Activated CD4-positive, alpha-beta T cell treated with anti-CD3 and anti-CD28 coated beads, Interleukin-2, amount 10 ng/mL, durations not matched to agents 24 days and 14 days (primary cell): ENCODE measurements at regions of chr7 and their contacts with region 1.

Region 1: DNA sequence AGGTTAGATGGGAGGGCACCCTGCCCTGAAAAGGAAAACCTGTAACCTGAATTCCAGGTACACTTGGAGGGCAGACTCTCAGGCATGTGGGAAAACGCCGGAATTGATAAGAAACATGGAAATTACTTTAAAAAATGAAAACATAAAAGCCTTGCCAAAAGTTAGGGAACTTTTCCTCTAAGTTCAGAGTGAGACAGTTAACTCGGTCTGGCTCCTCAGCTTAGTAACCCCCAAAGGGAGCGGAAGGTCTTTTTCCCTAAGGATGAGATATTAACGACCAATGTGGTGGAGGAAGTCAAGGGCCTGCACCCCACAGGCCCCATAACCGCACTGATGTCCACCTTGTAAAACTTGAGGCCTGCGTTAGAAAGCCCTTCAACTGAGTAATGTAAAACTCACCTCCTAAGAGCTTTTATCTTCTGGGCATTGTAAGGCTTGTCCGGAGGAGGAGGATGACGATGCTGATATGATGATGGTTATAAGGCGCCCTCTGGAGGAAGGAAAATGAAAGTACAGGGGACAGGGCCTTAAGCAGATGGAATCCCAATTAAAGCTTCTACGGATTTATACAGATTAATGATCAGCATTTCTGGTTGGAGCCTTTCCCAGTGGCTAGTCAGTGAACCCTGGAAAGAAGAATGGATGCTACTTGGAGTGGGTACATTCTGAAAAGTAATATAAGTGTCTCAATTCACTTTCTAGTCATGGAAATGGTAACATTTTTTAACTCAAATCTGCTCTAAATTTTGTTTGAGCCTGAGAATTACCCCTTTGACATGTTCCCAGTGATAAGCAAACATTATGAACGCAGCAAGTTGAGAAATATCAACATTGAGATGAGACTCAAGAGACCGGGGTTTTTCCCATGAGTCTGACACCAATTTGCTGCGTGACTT is 694 bp downstream of the COL1A2 start:
- DNase-seq: peak; percentile 85
- H3K4me3 Mint-ChIP-seq: peak overlapping the region; percentile 76
- H3K27ac Mint-ChIP-seq: peak overlapping the region; percentile 65
- H3K4me1 Mint-ChIP-seq: peaks cover 28% of the 10 kb centered on the region
- H3K27me3 Mint-ChIP-seq: peaks cover 2% of the 10 kb centered on the region

Region 2: GRCh38 chr7:93245525-93246432 is 1149.6 kb before region 1 on chr7:
- intact Hi-C with region 1: loop called (anchors 5 kb)
- DNase-seq: no peak
- H3K4me3 Mint-ChIP-seq: no peak overlapping the region
- H3K27ac Mint-ChIP-seq: no peak overlapping the region
- H3K4me1 Mint-ChIP-seq: no peaks in the 10 kb centered on the region
- H3K27me3 Mint-ChIP-seq: no peaks in the 10 kb centered on the region

Region 3: GRCh38 chr7:93715234-93715633 is 680.2 kb before region 1 on chr7:
- intact Hi-C with region 1: loop called (anchors 10 kb)
- DNase-seq: peak; percentile 58
- H3K4me3 Mint-ChIP-seq: no peak overlapping the region
- H3K27ac Mint-ChIP-seq: no peak overlapping the region
- H3K4me1 Mint-ChIP-seq: peaks cover 1% of the 10 kb centered on the region
- H3K27me3 Mint-ChIP-seq: peaks cover 7% of the 10 kb centered on the region

Region 4: GRCh38 chr7:94087664-94088352 is 307.6 kb before region 1 on chr7:
- intact Hi-C with region 1: loop called (anchors 1 kb)
- DNase-seq: peak; percentile 88
- H3K4me3 Mint-ChIP-seq: peak overlapping the region; percentile 60
- H3K27ac Mint-ChIP-seq: no peak overlapping the region
- H3K4me1 Mint-ChIP-seq: peaks cover 4% of the 10 kb centered on the region
- H3K27me3 Mint-ChIP-seq: peaks cover 31% of the 10 kb centered on the region

Region 5: DNA sequence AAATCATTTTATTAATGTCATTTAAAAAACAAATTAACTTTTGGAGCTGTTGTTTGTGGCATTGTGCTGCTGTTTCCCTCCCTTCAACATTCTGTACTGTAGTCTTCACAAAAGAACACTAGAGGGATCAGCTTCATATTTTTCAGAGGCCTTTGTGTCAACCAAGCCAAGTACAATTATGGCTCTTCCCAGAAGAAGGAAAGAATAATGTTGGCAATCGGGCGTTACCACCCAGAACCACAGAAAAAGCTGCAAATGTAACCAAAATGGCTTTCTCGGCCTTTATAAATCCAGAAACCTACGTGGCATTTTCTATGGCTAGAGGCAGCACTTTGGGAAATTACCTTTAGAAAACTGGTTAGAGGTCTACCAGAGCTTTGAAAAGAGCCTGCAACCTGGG is 99.5 kb before region 1 on chr7:
- intact Hi-C with region 1: loop called (anchors 5 kb)
- DNase-seq: no peak
- H3K4me3 Mint-ChIP-seq: no peak overlapping the region
- H3K27ac Mint-ChIP-seq: no peak overlapping the region
- H3K4me1 Mint-ChIP-seq: no peaks in the 10 kb centered on the region
- H3K27me3 Mint-ChIP-seq: peaks cover 16% of the 10 kb centered on the region

Region 6: DNA sequence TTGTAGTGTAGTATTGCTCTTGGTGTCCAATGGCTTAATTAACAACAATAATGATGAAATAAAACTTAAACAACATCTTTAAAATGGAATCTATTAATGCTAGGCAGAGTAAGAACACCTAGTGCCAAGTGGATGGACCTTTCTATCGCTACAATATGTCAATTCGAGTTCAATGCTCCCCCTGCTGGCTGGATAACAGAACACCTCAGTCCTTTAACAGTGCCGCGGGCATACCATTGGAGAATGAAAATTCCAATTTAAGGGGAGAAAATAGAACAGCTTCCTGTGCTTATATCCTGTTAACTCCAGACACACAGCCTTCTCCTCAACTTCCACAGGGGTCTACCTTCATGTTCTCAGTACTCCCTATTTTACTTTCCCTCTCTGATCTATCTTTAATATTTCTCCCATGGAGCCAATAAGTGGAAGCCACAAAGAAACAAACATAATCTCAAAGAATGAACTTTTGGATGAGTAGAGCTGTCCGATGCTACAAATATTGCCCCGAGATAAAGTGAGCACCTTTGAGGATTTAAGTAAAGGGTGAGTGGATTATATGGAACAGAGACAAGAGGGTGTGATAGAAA is 40.7 kb after region 1 on chr7:
- intact Hi-C with region 1: no loop called
- DNase-seq: peak; percentile 85
- H3K4me3 Mint-ChIP-seq: no peak overlapping the region
- H3K27ac Mint-ChIP-seq: no peak overlapping the region
- H3K4me1 Mint-ChIP-seq: no peaks in the 10 kb centered on the region
- H3K27me3 Mint-ChIP-seq: peaks cover 13% of the 10 kb centered on the region

Region 7: DNA sequence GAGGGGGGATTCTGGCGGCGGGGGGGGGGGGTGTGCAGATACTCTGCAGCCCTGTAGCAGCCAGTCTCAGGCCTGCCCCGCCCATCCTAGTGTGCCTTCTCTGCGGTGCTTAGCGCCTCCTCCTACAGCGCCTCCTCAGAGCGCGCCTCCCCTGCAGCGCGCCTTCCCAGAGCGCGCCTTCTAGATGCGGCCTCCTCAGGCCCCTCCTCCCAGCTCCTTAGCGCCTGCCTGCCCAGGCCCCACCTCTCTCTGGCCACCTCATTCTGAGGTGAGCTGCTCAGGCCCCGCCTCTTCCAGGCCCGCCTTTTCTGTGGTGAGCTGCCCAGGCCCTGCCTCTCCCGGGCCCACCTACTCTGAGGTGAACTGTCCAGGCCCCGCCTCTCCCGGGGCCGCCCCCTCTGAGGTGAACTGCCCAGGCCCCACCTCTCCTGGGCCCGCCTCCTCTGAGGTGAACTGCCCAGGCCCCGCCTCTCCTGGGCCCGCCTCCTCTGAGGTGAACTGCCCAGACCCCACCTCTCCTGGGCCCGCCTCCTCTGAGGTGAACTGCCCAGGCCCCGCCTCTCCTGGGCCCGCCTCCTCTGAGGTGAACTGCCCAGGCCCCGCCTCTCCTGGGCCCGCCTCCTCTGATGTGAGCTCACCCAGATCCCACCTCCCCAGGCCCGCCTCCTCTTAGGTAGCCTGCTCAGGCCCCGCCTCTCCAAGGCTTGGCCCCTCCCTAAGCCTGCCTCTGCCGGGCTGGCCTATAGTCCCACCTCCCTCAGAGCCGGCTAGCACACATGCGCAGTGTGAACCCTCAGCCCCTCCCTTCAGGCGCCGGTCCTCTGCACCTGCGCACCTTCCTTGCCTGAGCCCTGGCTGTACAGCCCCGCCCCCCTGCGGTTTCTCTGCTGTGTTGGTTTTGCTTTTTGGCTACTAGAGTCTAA is 262.6 kb after region 1 on chr7:
- intact Hi-C with region 1: loop called (anchors 5 kb)
- DNase-seq: peak; percentile 96
- H3K4me3 Mint-ChIP-seq: peak overlapping the region; percentile 82
- H3K27ac Mint-ChIP-seq: no peak overlapping the region
- H3K4me1 Mint-ChIP-seq: peaks cover 15% of the 10 kb centered on the region
- H3K27me3 Mint-ChIP-seq: peaks cover 28% of the 10 kb centered on the region